HepG2 (cell line): ENCODE measurements at regions of chr1 and their contacts with region 1.

Region 1: DNA sequence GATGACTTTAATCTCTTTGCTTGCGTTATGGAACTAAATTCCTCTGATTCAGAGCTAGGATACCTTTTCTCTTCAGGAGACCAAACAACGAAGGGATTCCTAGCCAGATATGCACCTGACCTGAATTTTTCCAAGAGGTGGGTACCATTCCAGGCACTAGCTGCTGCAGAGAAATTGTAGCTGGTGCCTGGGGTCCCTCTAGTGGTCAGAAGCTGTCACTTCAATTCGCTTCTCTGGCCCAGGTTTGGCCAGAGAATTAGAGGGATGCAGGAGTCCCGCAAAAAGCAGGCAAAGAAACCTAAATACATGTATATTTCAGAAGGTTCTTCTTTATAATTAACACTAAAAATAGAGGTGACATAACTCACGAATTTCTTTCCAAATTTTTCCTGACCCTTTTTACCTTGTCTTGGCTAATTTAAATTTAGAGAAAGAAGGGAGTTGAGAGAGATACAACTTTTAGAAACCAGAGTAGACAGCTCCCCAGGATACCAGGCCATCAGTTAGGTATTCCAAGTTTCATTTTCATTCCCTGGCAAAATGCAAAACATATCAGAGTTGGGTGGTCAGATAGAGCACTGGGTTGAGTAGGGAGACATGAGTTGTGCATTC is 9.6 kb downstream of the ACKR1 start:
- DNase-seq: peak; percentile 8
- ATAC-seq: peak; percentile 83
- H3K4me3 ChIP-seq: no peak overlapping the region
- H3K27ac ChIP-seq: no peak overlapping the region
- H3K4me1 ChIP-seq: no peaks in the 10 kb centered on the region
- H3K27me3 ChIP-seq: no peaks in the 10 kb centered on the region
- CTCF ChIP-seq: peak; percentile 71
- EP300 ChIP-seq: no peak
- POLR2A ChIP-seq: no peak
- RAD21 ChIP-seq: no peak

Region 2: GRCh38 chr1:158735848-158736247 is 478.4 kb before region 1 on chr1:
- CTCF ChIA-PET with region 1: no interaction called
- POLR2A ChIA-PET with region 1: no interaction called
- in situ Hi-C with region 1: no loop called
- intact Hi-C with region 1: no loop called
- DNase-seq: no peak
- ATAC-seq: no peak
- H3K4me3 ChIP-seq: no peak overlapping the region
- H3K27ac ChIP-seq: no peak overlapping the region
- H3K4me1 ChIP-seq: no peaks in the 10 kb centered on the region
- H3K27me3 ChIP-seq: no peaks in the 10 kb centered on the region
- CTCF ChIP-seq: no peak
- EP300 ChIP-seq: no peak
- POLR2A ChIP-seq: no peak
- RAD21 ChIP-seq: no peak

Region 3: DNA sequence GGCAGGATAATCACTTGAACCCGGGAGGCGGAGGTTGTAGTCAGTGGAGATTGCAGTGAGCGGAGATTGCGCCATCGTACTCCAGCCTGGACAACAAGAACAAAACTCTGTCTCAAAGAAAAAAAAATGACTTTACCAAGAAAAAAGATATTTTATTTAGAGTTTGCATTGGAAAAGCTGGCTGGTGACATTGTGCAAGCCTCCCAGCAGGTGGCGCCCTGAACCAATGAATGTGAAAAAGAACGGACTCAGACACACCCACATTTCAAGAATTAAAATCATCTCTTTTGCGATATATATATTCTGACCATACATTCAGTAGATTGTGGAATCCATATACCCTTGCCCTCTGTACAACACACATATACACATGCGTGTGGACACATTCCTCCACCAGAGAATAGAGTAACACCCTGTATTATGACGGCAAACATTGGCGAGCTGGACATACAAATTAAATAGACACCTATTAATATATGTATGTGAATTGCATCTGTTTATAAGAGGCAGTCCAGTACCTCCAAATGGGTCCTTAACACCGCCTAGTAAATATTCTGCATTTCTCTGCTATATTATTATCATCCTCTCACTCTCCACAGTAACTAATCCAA is 81.9 kb before region 1 on chr1:
- CTCF ChIA-PET with region 1: interaction called, 15 read pairs
- POLR2A ChIA-PET with region 1: no interaction called
- in situ Hi-C with region 1: no loop called
- intact Hi-C with region 1: no loop called
- DNase-seq: peak; percentile 40
- ATAC-seq: peak; percentile 38; the same call in 2 of the 3 replicates
- H3K4me3 ChIP-seq: no peak overlapping the region
- H3K27ac ChIP-seq: no peak overlapping the region
- H3K4me1 ChIP-seq: no peaks in the 10 kb centered on the region
- H3K27me3 ChIP-seq: no peaks in the 10 kb centered on the region
- CTCF ChIP-seq: peak; percentile 66
- EP300 ChIP-seq: no peak
- POLR2A ChIP-seq: no peak
- RAD21 ChIP-seq: no peak

Region 4: GRCh38 chr1:159161001-159161718 is 53.1 kb before region 1 on chr1:
- CTCF ChIA-PET with region 1: interaction called, 18 read pairs
- POLR2A ChIA-PET with region 1: no interaction called
- in situ Hi-C with region 1: no loop called
- intact Hi-C with region 1: loop called (anchors 1 kb)
- DNase-seq: peak; percentile 54
- ATAC-seq: peak; percentile 98
- H3K4me3 ChIP-seq: no peak overlapping the region
- H3K27ac ChIP-seq: no peak overlapping the region
- H3K4me1 ChIP-seq: no peaks in the 10 kb centered on the region
- H3K27me3 ChIP-seq: no peaks in the 10 kb centered on the region
- CTCF ChIP-seq: peak; percentile 89
- EP300 ChIP-seq: no peak
- POLR2A ChIP-seq: no peak
- RAD21 ChIP-seq: peak; percentile 84

Region 5: GRCh38 chr1:159266832-159267231 is 52.6 kb after region 1 on chr1:
- CTCF ChIA-PET with region 1: no interaction called
- POLR2A ChIA-PET with region 1: no interaction called
- in situ Hi-C with region 1: no loop called
- intact Hi-C with region 1: no loop called
- DNase-seq: no peak
- ATAC-seq: no peak
- H3K4me3 ChIP-seq: no peak overlapping the region
- H3K27ac ChIP-seq: no peak overlapping the region
- H3K4me1 ChIP-seq: no peaks in the 10 kb centered on the region
- H3K27me3 ChIP-seq: no peaks in the 10 kb centered on the region
- CTCF ChIP-seq: no peak
- EP300 ChIP-seq: no peak
- POLR2A ChIP-seq: no peak
- RAD21 ChIP-seq: no peak